Endothelial cell of umbilical vein (primary cell): ENCODE measurements at regions of chr3 and their contacts with region 1.

Region 1: GRCh38 chr3:42443819-42444436 is 33.5 kb upstream of the LYZL4 start:
- DNase-seq: peak; percentile 74
- H3K4me3 ChIP-seq: no peak overlapping the region
- H3K27ac ChIP-seq: no peak overlapping the region
- H3K4me1 ChIP-seq: no peaks in the 10 kb centered on the region
- H3K27me3 ChIP-seq: no peaks in the 10 kb centered on the region
- CTCF ChIP-seq: peak; percentile 95 to 98
- POLR2A ChIP-seq: no peak

Region 2: GRCh38 chr3:41893977-41894376 is 550.0 kb before region 1 on chr3:
- CTCF ChIA-PET with region 1: interaction called, 9 read pairs
- POLR2A ChIA-PET with region 1: no interaction called
- dilution Hi-C with region 1: no loop called
- intact Hi-C with region 1: loop called (anchors 1 kb)
- DNase-seq: peak; percentile 75
- H3K4me3 ChIP-seq: no peak overlapping the region
- H3K27ac ChIP-seq: no peak overlapping the region
- H3K4me1 ChIP-seq: no peaks in the 10 kb centered on the region
- H3K27me3 ChIP-seq: no peaks in the 10 kb centered on the region
- CTCF ChIP-seq: peak; percentile 14 to 22
- POLR2A ChIP-seq: no peak

Region 3: DNA sequence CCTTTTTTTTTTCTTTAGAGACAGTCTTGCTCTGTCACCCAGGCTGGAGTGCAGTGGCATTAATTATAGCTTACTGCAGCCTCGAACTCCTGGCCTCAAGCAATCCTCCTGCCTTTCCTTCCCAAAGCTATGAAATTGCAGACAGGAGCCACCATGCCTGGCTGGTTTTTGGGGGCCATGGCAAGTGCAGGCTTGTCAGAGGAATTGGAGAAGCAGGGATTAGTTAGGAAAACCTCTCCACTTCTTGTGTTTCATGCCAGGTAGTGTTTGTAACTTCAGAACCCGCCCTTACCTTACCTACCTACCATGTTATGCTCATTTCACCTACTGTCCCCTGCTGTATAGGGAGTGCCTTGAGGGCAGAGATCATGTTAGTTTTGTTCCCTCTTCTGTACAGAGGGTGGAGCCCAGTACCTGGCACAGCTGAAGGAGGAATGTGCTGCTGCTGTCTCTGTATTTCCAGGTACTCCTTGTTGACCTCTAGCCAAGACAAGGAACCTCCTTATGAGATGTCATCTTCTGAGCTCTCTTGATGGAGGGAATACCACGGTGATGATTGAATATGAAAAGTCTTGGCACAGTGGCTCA is 309.0 kb before region 1 on chr3:
- CTCF ChIA-PET with region 1: no interaction called
- POLR2A ChIA-PET with region 1: no interaction called
- dilution Hi-C with region 1: no loop called
- intact Hi-C with region 1: no loop called
- DNase-seq: no peak
- H3K4me3 ChIP-seq: no peak overlapping the region
- H3K27ac ChIP-seq: no peak overlapping the region
- H3K4me1 ChIP-seq: no peaks in the 10 kb centered on the region
- H3K27me3 ChIP-seq: no peaks in the 10 kb centered on the region
- CTCF ChIP-seq: no peak
- POLR2A ChIP-seq: no peak

Region 4: DNA sequence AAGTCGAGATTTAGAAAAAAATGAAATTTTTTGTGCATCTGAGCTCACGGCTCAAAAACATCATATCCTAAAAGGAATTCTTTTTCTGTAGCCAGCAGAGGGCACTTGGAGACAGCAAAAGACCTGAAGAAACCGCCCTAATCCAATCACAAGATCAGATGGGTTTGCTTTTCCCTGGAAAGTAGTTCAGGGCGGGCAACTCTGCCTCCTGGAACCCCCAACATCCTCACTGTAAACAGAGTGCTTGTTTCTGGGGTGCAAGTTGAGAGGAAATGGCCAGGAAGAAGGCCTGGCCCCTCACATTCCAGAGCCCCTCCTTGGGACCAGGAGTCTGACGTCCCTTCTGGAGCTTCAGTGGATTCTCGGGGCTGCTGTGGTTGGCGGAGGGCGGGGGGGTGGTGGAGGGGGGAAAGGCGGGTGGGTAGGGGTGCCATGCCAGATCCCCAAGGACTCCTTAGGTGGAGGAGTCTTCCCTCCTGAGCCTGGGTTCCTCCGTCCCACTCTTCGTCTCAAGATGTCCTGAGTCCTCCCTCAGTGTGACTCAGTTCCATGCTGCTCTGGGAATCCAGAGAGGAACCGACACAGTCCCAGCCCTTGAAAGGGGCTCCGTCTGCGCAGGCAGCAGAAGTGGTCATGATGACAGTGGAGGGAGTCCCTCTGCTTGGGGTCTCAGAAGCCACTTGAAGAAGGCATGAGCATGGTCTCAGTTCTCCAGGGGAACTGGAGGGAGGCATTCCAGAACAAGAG is 213.8 kb before region 1 on chr3:
- CTCF ChIA-PET with region 1: interaction called, 105 read pairs
- POLR2A ChIA-PET with region 1: no interaction called
- dilution Hi-C with region 1: no loop called
- intact Hi-C with region 1: loop called (anchors 1 kb)
- DNase-seq: peak; percentile 46
- H3K4me3 ChIP-seq: no peak overlapping the region
- H3K27ac ChIP-seq: no peak overlapping the region
- H3K4me1 ChIP-seq: no peaks in the 10 kb centered on the region
- H3K27me3 ChIP-seq: peaks cover 4 to 7% of the 10 kb centered on the region in 2 experiments
- CTCF ChIP-seq: peak; percentile 43 to 45
- POLR2A ChIP-seq: no peak

Region 5: DNA sequence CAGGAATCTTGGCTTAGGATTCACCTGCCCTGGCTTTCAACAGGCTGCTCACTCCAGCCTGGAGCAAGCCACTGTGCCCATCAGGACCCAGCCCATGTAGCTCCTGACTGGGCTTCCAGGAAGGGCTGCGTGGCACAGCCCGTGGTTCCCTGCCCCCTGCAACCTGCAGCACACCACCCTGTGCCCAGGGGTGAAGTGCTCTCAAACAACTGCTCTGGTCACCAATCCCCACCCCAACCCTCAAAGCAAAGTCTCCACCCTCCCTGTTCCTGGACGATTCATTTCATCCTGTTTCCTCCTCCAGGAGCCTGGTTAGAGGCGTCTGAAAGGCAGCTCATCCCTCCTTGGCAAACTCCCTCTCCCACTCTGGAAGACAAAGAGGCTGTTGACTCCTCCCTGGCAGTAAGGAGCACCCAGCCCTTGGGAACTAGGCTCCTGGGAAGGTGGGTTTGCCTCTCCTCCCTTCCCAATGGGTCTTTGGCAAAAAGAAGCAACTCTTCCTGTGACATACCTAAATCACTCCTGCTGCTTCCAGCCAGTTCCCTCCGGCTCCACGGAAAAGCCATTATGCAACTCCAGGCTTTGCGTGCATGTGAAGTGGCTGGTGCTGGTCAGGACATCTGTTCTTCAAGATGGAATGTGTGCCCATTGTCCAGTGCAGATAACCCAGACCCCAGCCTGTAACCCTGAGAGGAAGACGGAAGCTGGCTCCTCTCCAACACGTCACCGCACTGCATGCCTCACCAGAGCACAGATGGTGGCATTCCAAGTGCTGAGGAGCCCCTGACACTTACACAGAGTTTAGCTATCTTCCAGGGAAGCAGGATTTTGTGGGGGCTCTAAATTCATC is 29.4 kb after region 1 on chr3:
- CTCF ChIA-PET with region 1: interaction called, 7 read pairs
- POLR2A ChIA-PET with region 1: no interaction called
- dilution Hi-C with region 1: no loop called
- intact Hi-C with region 1: loop called (anchors 2 kb)
- DNase-seq: peak; percentile 92
- H3K4me3 ChIP-seq: peak overlapping the region in 1 of 3 experiments; percentile 2
- H3K27ac ChIP-seq: peak overlapping the region; percentile 89
- H3K4me1 ChIP-seq: peaks cover 32% of the 10 kb centered on the region
- H3K27me3 ChIP-seq: no peaks in the 10 kb centered on the region
- CTCF ChIP-seq: no peak
- POLR2A ChIP-seq: no peak

Region 6: GRCh38 chr3:42547401-42547945 is 103.5 kb after region 1 on chr3:
- CTCF ChIA-PET with region 1: interaction called, 12 read pairs
- POLR2A ChIA-PET with region 1: no interaction called
- dilution Hi-C with region 1: no loop called
- intact Hi-C with region 1: no loop called
- DNase-seq: peak; percentile 57
- H3K4me3 ChIP-seq: no peak overlapping the region
- H3K27ac ChIP-seq: no peak overlapping the region
- H3K4me1 ChIP-seq: no peaks in the 10 kb centered on the region
- H3K27me3 ChIP-seq: no peaks in the 10 kb centered on the region
- CTCF ChIP-seq: peak; percentile 95 to 96
- POLR2A ChIP-seq: no peak

Region 7: DNA sequence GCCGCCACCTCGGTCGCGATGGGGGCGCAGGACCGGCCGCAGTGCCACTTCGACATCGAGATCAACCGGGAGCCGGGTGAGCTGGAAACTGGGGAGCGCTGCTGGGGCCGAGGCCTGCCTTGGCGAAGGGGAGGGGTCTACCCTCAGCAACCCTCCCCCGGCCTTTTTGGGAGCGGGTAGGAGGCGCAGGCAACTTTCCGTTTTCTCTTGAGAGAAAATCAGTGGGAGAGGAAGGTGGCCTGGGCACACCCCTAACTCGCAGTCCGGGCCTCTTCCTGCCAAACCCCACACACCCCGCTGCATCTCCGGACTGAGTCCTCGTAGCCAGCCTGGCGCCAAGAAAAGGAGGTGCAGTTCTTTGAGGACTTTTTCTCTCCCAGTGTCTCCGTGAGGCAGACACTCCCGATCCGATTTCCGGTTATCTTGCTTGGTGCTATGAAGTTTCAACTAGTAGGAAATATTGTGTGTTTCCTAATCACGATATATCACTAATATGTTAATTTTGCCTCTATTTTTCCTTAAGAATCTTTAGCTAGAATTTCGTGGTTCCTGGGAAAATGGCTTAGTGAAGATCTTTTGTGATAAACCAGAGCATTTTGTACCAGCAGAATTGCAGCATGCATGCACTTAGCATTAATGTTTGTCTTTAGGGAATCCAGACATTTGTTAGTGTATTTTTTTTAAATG is 157.2 kb after region 1 on chr3:
- CTCF ChIA-PET with region 1: no interaction called
- POLR2A ChIA-PET with region 1: no interaction called
- dilution Hi-C with region 1: no loop called
- intact Hi-C with region 1: no loop called
- DNase-seq: peak; percentile 68
- H3K4me3 ChIP-seq: peak overlapping the region; percentile 70 to 99 (median 85)
- H3K27ac ChIP-seq: peak overlapping the region; percentile 62
- H3K4me1 ChIP-seq: peaks cover 9% of the 10 kb centered on the region
- H3K27me3 ChIP-seq: no peaks in the 10 kb centered on the region
- CTCF ChIP-seq: no peak
- POLR2A ChIP-seq: no peak